Gastrocnemius medialis (tissue), 4 donors: ENCODE measurements at regions of chr10 and their contacts with region 1.

Region 1: GRCh38 chr10:119006451-119007210 is 22.9 kb upstream of the NANOS1 start:
- DNase-seq: peak; percentile 75 to 95
- ATAC-seq: peak; percentile 93 to 98
- H3K4me3 ChIP-seq: no peak overlapping the region
- H3K27ac ChIP-seq: peak overlapping the region; percentile 81 to 87 (median 86)
- H3K4me1 ChIP-seq: peaks cover 20 to 22% of the 10 kb centered on the region in 2 donors
- H3K27me3 ChIP-seq: no peaks in the 10 kb centered on the region
- CTCF ChIP-seq: peak in 1 of 5 experiments; percentile 15
- POLR2A ChIP-seq: peak; percentile 29 to 31

Region 2: GRCh38 chr10:118958984-118959916 is 47.4 kb before region 1 on chr10:
- in situ Hi-C with region 1: no loop called
- intact Hi-C with region 1: loop called (anchors 2 kb)
- DNase-seq: peak; percentile 74 to 84
- ATAC-seq: peak; percentile 91 to 96
- H3K4me3 ChIP-seq: no peak overlapping the region
- H3K27ac ChIP-seq: peak overlapping the region; percentile 49 to 82 (median 68)
- H3K4me1 ChIP-seq: peaks cover 17 to 28% of the 10 kb centered on the region in 2 donors
- H3K27me3 ChIP-seq: no peaks in the 10 kb centered on the region
- CTCF ChIP-seq: no peak
- POLR2A ChIP-seq: no peak

Region 3: DNA sequence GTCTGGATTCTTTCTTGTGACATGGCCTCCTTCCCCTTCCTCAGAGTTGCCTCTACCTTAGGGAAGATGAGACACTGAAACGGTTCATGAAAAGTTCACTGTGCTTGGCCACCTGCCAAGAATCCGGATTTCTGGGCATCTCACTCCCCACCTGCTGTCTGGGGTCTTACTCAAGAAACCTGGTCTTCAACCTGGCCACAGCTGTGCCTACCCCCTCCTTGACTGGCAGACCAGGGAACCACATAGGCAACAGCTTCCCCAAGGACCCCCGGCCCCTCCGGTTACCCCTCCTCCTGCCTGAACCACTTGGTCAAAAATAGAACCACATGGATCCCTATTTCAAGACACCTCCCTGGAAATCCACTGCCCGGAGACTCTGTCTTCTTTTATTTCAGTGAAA is 35.9 kb before region 1 on chr10:
- in situ Hi-C with region 1: no loop called
- intact Hi-C with region 1: loop called (anchors 2 kb)
- DNase-seq: peak in 1 of 2 donors; percentile 72
- ATAC-seq: peak; percentile 36 to 85
- H3K4me3 ChIP-seq: peak overlapping the region in 2 of 4 donors; percentile 1 to 17
- H3K27ac ChIP-seq: peak overlapping the region; percentile 41 to 68 (median 63)
- H3K4me1 ChIP-seq: peaks cover 39 to 45% of the 10 kb centered on the region in 2 donors
- H3K27me3 ChIP-seq: no peaks in the 10 kb centered on the region
- CTCF ChIP-seq: no peak
- POLR2A ChIP-seq: no peak

Region 4: GRCh38 chr10:119080521-119081260 is 74.1 kb after region 1 on chr10 and contains the start of gene EIF3A:
- in situ Hi-C with region 1: no loop called
- intact Hi-C with region 1: loop called (anchors 2 kb)
- DNase-seq: peak; percentile 81 to 92
- ATAC-seq: peak; percentile 87 to 90
- H3K4me3 ChIP-seq: peak within 1 kb of the TSS; percentile 77 to 94 (median 92)
- H3K27ac ChIP-seq: peak within 1 kb of the TSS; percentile 95 to 99 (median 97)
- H3K4me1 ChIP-seq: peaks cover 30 to 32% of the 10 kb centered on the region in 2 donors
- H3K27me3 ChIP-seq: no peaks in the 10 kb centered on the region
- CTCF ChIP-seq: peak in 1 of 5 experiments; percentile 9
- POLR2A ChIP-seq: peak; percentile 96 to 97
- total RNA-seq, gene EIF3A: 136 to 240 (median 191) TPM